ENCODE measurements at regions of chr3 and their contacts with region 1.

Region 1: DNA sequence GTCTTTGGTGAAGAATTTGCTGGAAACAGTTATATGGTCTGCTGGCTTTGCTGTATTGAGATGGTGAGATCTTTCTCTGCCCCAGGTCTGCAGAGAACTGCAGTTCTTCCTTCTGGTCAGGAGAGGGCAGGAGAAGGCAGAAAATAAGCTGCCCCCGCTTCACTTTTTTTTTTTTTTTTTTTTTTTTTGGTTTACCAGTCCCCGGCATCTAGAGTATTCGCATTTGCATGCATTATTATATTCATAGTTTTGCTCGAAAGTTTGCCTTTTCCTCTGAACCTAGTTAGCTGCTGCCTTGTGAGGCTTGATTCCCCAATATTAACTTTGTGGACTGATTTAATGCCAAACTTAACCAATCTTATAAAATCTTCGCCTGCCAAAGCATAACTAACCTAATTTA is 10.6 kb upstream of the PARL start:
- DNase-seq: peak; percentile 84
- H3K4me3 ChIP-seq: no peak overlapping the region; a peak in 1 of 4 replicates
- H3K27ac ChIP-seq: no peak overlapping the region
- H3K4me1 ChIP-seq: no peaks in the 10 kb centered on the region
- H3K27me3 ChIP-seq: no peaks in the 10 kb centered on the region
- CTCF ChIP-seq: peak; percentile 87
- EP300 ChIP-seq: no peak
- RAD21 ChIP-seq: peak; percentile 94

Region 2: GRCh38 chr3:183825456-183826161 is 69.7 kb before region 1 on chr3 and contains the start of gene MAP6D1:
- CTCF ChIA-PET with region 1: no interaction called
- POLR2A ChIA-PET with region 1: no interaction called
- DNase-seq: peak; percentile 96
- H3K4me3 ChIP-seq: peak within 1 kb of the TSS; percentile 61
- H3K27ac ChIP-seq: 0 out of 4 replicates have a peak within 1 kb of the TSS, but pooled peaks of 1 of the 2 experiments have one; percentile 30
- H3K4me1 ChIP-seq: peaks cover 0 to 26% of the 10 kb centered on the region in 2 experiments; a peak in 2 of 4 replicates
- H3K27me3 ChIP-seq: no peaks in the 10 kb centered on the region
- CTCF ChIP-seq: peak; percentile 46
- EP300 ChIP-seq: no peak
- RAD21 ChIP-seq: peak; percentile 32
- polyA plus RNA-seq, gene MAP6D1: 2.6 and 3.4 TPM in 2 replicates

Region 3: DNA sequence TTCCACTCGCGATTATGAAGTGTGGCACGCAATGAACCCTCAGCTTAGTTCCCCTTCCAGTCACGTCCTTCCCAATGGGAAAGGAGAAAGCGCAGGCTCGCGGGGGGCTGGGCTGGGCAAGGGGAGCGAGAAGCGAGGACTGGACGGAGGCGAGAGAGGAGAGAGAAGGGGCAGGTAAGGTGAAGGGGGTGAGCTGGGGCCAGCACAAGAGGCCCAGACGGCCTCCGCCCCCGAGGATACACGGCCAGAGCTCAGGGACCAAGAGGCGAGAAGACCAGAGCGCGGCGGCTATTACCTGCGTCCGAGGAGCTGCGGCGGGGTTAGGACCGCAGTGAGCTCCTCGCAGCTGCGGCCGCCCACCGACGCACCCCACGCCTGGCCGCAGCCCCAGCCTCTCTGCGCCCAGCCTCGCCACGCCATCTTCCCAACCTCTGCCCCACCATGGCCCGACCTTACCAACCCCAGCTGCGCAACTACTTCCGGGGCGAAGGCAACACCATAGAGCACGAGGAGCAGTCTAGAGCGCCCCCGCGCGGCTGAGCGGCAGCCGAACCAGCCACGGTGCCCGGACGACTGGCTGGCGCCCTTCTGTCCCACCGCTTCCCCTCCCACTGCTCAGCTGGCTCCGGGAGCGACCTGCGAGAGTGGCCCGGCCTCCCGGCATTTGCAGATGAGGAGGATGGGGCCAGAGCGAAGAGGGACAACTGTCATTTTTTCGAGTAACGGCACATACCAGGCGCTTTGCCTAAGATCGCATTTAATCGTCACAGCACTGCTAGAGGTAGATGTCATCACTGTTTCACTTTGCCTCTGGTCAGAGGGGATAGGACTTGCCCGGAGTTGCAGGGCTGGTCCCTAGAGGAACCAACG is 10.6 kb before region 1 on chr3 and contains the start of gene PARL:
- CTCF ChIA-PET with region 1: interaction called, 50 read pairs
- POLR2A ChIA-PET with region 1: interaction called, 4 read pairs
- DNase-seq: peak; percentile 96
- H3K4me3 ChIP-seq: peak within 1 kb of the TSS; percentile 78 to 97
- H3K27ac ChIP-seq: peak within 1 kb of the TSS; percentile 62 to 74
- H3K4me1 ChIP-seq: peaks cover 0 to 11% of the 10 kb centered on the region in 2 experiments; a peak in 2 of 4 replicates
- H3K27me3 ChIP-seq: no peaks in the 10 kb centered on the region
- CTCF ChIP-seq: peak; percentile 92
- EP300 ChIP-seq: no peak
- RAD21 ChIP-seq: peak; percentile 72
- polyA plus RNA-seq, gene PARL: 50.1 and 58.5 TPM in 2 replicates

Region 4: DNA sequence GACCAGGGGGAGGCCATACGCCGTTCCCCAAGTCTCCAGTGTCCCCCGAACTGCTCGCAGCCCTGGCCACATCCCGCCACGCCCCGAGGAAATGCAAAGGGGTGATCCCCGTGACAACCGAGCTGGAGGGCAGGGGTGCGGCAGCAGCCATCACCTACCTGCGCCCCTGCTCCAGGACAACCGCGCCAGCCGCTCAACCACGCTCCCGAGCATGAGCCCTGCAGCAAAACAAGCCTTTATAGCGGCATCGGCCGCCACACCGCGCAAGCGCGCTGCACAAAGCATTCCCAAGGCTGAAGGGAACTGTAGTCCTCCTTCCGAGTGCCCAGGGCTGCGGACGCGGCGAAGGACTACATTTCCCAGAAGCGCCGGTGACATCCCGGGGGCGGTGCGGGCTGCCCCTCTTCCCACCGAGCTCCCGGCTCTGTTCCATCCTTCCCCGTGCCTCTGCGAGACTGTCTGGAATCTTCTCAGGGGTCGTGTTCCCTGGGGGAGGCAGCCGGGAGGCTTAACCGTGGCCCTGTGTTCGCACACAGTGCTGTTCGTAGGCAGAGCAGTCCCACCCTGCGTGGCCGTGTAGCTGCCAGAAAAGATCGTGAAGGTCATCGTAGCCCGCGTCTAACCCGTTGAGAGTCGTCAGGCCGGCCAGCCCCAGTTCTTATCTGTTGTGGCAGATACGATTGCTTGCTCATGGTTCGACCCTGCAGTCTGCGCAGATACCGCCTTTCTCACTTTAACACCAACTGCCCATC is 122.6 kb after region 1 on chr3 and contains the start of gene ABCC5:
- CTCF ChIA-PET with region 1: interaction called, 55 read pairs
- POLR2A ChIA-PET with region 1: interaction called, 3 read pairs
- DNase-seq: peak; percentile 95
- H3K4me3 ChIP-seq: peak within 1 kb of the TSS; percentile 99 to 100
- H3K27ac ChIP-seq: peak within 1 kb of the TSS; percentile 45 to 94; a peak in 3 of 4 replicates
- H3K4me1 ChIP-seq: peaks cover 11 to 22% of the 10 kb centered on the region in 2 experiments; a peak in 3 of 4 replicates
- H3K27me3 ChIP-seq: no peaks in the 10 kb centered on the region
- CTCF ChIP-seq: no peak; the same call in 1 of the 2 replicates
- EP300 ChIP-seq: no peak
- RAD21 ChIP-seq: no peak
- polyA plus RNA-seq, gene ABCC5: 25.9 and 40.6 TPM in 2 replicates

Region 5: GRCh38 chr3:184135149-184135910 is 240.0 kb after region 1 on chr3 and contains the start of gene EIF2B5:
- CTCF ChIA-PET with region 1: interaction called, 13 read pairs
- POLR2A ChIA-PET with region 1: no interaction called
- DNase-seq: peak; percentile 93
- H3K4me3 ChIP-seq: peak within 1 kb of the TSS; percentile 82 to 96
- H3K27ac ChIP-seq: peak within 1 kb of the TSS; percentile 70 to 86
- H3K4me1 ChIP-seq: peaks cover 0 to 8% of the 10 kb centered on the region in 2 experiments; a peak in 3 of 4 replicates
- H3K27me3 ChIP-seq: no peaks in the 10 kb centered on the region
- CTCF ChIP-seq: peak; percentile 56
- EP300 ChIP-seq: no peak
- RAD21 ChIP-seq: peak; percentile 13
- polyA plus RNA-seq, gene EIF2B5: 46.8 and 61.5 TPM in 2 replicates

Region 6: DNA sequence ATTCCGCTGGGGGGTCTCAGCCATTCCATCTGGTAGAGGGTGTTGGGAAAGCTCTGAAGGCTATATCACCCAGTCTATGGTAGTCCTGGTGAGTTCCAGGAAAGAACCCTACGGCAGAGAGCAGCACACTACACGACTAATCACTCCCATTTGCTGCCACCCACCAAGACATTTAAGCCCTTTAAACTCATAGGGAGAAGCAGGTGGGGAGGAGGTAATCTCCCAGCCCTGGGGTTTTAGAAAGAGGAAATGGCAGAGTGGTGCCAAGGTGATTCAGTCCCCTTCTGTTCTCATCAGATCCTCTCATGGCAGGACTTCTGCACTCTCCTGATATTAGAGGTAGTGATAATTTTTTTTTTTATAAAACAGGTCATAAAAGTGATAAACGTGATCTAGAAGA is 323.5 kb after region 1 on chr3:
- CTCF ChIA-PET with region 1: no interaction called
- POLR2A ChIA-PET with region 1: no interaction called
- DNase-seq: no peak
- H3K4me3 ChIP-seq: no peak overlapping the region
- H3K27ac ChIP-seq: no peak overlapping the region
- H3K4me1 ChIP-seq: no peaks in the 10 kb centered on the region
- H3K27me3 ChIP-seq: no peaks in the 10 kb centered on the region
- CTCF ChIP-seq: no peak
- EP300 ChIP-seq: no peak
- RAD21 ChIP-seq: no peak

Region 7: DNA sequence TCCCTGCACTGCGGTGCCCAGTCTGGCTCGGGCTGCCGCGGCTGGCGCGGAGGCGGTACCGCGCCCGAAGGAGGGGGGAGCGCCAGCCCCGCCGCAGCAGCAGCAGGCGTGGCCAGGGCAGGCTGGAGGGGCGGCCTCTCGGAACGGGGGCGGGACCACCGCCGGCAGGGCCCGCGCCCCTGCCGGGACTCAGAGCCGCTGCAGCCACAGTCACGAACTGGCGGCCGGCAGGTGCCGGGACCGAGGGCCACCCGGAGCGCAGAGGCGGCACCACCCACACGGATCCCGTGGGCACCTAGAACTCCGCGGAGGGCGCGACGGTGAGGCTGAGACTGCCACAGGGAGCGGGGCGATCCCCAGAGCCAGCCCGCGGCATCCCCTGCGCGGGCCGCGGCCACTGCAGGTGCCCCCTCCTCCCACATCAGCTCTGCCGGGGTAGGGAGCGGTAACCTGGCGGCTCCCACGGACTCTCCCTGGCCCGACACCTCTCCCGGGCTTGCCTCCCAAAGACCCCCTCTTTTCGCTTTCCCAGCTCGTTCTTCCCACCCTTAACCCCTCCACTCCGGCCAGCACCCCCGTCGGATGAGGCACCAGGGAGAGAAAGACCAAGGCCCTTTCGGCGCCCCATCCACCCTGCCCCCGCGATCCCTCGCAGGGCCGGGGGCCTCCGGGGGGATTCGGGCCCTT is 334.2 kb after region 1 on chr3 and contains the start of gene VWA5B2:
- CTCF ChIA-PET with region 1: interaction called, 11 read pairs
- POLR2A ChIA-PET with region 1: no interaction called
- DNase-seq: peak; percentile 99
- H3K4me3 ChIP-seq: peak within 1 kb of the TSS; percentile 50 to 64
- H3K27ac ChIP-seq: no peak within 1 kb of the TSS
- H3K4me1 ChIP-seq: peaks cover 0 to 26% of the 10 kb centered on the region in 2 experiments; a peak in 2 of 4 replicates
- H3K27me3 ChIP-seq: peaks cover 27% of the 10 kb centered on the region
- CTCF ChIP-seq: peak; percentile 21; the same call in 1 of the 2 replicates
- EP300 ChIP-seq: no peak
- RAD21 ChIP-seq: 0 out of 2 replicates have a peak, but pooled peaks have one; percentile 16
- polyA plus RNA-seq, gene VWA5B2: 0.08 and 0.19 TPM in 2 replicates

Region 8: DNA sequence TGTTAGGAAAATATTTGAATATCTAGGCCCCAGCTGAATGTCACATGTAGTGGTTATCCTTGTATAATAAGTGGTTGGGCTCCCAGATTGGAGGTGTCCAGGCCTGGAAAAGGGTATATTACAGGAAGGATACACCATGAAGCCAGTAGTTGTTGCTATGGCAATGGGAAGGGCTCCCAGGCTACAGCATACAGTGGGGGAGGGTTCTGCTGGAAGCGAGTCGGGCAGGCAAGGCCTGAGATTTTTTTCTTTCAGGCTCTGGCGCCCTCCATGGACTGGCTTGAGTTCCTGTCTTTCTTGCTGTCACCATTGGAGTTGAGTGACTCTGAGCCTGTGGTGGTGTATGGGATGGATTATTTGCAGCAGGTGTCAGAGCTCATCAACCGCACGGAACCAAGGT is 389.4 kb after region 1 on chr3:
- CTCF ChIA-PET with region 1: interaction called, 15 read pairs
- POLR2A ChIA-PET with region 1: no interaction called
- DNase-seq: peak; percentile 91
- H3K4me3 ChIP-seq: no peak overlapping the region; a peak in 1 of 4 replicates
- H3K27ac ChIP-seq: no peak overlapping the region
- H3K4me1 ChIP-seq: peaks cover 0 to 4% of the 10 kb centered on the region in 2 experiments; a peak in 1 of 4 replicates
- H3K27me3 ChIP-seq: no peaks in the 10 kb centered on the region
- CTCF ChIP-seq: peak; percentile 60
- EP300 ChIP-seq: no peak
- RAD21 ChIP-seq: peak; percentile 90

Region 9: GRCh38 chr3:184290331-184290730 is 395.0 kb after region 1 on chr3:
- CTCF ChIA-PET with region 1: interaction called, 18 read pairs
- POLR2A ChIA-PET with region 1: no interaction called
- DNase-seq: no peak
- H3K4me3 ChIP-seq: no peak overlapping the region
- H3K27ac ChIP-seq: no peak overlapping the region
- H3K4me1 ChIP-seq: no peaks in the 10 kb centered on the region
- H3K27me3 ChIP-seq: no peaks in the 10 kb centered on the region; the same call in 1 of the 2 replicates
- CTCF ChIP-seq: no peak
- EP300 ChIP-seq: no peak
- RAD21 ChIP-seq: no peak